Posterior vena cava (tissue), 2 donors: ENCODE measurements at regions of chr11 and their contacts with region 1.

Region 1: GRCh38 chr11:44065841-44066731 is at the start of gene ACCS:
- DNase-seq: peak; percentile 99
- total RNA-seq, gene ACCS: 18.5 to 30.5 TPM

Region 2: DNA sequence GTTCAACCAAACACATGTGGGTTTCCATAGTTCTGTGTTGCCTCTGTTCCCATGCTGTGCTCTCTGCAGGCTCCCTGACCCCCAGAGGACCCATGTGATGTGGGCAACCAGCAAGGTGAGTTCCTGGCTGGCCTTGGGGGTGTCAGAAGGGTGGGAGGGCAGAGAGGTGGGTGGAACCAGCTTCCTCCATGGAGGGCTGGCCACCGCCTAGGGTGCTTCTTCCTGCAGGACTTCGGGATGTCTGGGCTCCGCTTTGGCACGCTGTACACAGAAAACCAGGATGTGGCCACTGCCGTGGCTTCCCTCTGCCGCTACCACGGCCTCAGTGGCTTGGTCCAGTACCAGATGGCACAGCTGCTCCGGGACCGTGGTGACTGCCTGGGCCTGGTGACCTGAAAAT is 14.9 kb after region 1 on chr11:
- intact Hi-C with region 1: loop called in 1 of 2 experiments (anchors 1 kb)
- DNase-seq: no peak